ENCODE measurements at regions of chr5 and their contacts with region 1.

Region 1: GRCh38 chr5:105644522-105644921 is 2026.2 kb downstream of the EFNA5 start:
- DNase-seq: no peak
- H3K4me3 ChIP-seq: no peak overlapping the region
- CTCF ChIP-seq: no peak

Region 2: DNA sequence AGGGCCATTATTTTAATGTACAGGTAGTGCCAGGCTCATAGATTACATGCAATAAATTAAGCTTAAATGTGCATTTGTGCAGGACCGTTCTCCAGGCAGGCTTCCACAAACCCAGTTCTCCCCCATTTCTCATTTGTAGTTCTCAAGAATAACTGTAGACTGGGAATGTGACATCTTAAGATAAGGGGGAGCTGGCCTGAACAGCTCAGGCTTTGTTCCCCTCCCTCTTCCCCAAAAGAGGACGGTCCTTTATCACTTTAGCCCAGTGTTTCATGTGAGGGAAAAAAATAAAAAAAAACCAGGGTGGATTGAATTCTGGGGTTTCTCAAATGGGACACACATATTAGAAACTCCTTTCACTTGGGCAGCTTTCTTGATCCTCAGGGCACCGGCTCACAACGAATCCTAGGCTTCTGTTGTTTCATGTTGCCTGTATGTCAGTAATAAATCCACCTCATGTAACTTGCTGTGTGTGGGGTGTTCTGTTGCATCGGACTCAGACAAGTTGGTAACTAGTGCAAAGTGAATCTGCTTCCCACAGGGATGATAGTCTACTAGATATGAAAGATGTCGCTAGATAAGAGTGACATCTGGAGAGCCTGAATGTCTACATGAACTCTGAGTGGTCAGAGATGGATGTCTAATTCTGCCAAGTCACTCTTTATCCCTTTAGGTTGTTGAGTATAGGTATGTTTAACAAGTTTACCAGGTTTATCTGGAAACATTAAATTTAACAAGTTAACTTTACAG is 51.3 kb before region 1 on chr5:
- in situ Hi-C with region 1: loop called (anchors 5 kb)
- DNase-seq: no peak
- H3K4me3 ChIP-seq: no peak overlapping the region
- CTCF ChIP-seq: no peak

Measured in astrocyte of the cerebellum (primary cell).